CD8-positive, alpha-beta T cell (primary cell): ENCODE measurements at regions of chr5 and their contacts with region 1.

Region 1: GRCh38 chr5:140710899-140711552 is 10.8 kb downstream of the ZMAT2 start:
- DNase-seq: peak; percentile 66 to 95 (median 85)
- ATAC-seq: peak; percentile 83
- H3K4me3 ChIP-seq: peak overlapping the region; percentile 58 to 74
- H3K4me3 Mint-ChIP-seq: peak overlapping the region; percentile 99
- H3K27ac ChIP-seq: peak overlapping the region; percentile 72 to 86
- H3K27ac Mint-ChIP-seq: peak overlapping the region; percentile 99
- H3K4me1 ChIP-seq: no peaks in the 10 kb centered on the region
- H3K4me1 Mint-ChIP-seq: peaks cover 16% of the 10 kb centered on the region
- H3K27me3 ChIP-seq: no peaks in the 10 kb centered on the region
- H3K27me3 Mint-ChIP-seq: no peaks in the 10 kb centered on the region
- CTCF ChIP-seq: no peak

Region 2: GRCh38 chr5:140302786-140303639 is 408.0 kb before region 1 on chr5 and contains the start of gene PFDN1:
- CTCF ChIA-PET with region 1: no interaction called
- POLR2A ChIA-PET with region 1: no interaction called
- intact Hi-C with region 1: no loop called
- DNase-seq: peak; percentile 77 to 97 (median 90)
- ATAC-seq: peak; percentile 100
- H3K4me3 ChIP-seq: peak within 1 kb of the TSS; percentile 73 to 87
- H3K4me3 Mint-ChIP-seq: peak within 1 kb of the TSS; percentile 99
- H3K27ac ChIP-seq: peak within 1 kb of the TSS; percentile 61 to 82
- H3K27ac Mint-ChIP-seq: peak within 1 kb of the TSS; percentile 98
- H3K4me1 ChIP-seq: peaks cover 14% of the 10 kb centered on the region
- H3K4me1 Mint-ChIP-seq: peaks cover 29% of the 10 kb centered on the region
- H3K27me3 ChIP-seq: no peaks in the 10 kb centered on the region
- H3K27me3 Mint-ChIP-seq: peaks cover 4% of the 10 kb centered on the region
- CTCF ChIP-seq: no peak
- total RNA-seq, gene PFDN1: 28.4 to 30.5 TPM

Region 3: DNA sequence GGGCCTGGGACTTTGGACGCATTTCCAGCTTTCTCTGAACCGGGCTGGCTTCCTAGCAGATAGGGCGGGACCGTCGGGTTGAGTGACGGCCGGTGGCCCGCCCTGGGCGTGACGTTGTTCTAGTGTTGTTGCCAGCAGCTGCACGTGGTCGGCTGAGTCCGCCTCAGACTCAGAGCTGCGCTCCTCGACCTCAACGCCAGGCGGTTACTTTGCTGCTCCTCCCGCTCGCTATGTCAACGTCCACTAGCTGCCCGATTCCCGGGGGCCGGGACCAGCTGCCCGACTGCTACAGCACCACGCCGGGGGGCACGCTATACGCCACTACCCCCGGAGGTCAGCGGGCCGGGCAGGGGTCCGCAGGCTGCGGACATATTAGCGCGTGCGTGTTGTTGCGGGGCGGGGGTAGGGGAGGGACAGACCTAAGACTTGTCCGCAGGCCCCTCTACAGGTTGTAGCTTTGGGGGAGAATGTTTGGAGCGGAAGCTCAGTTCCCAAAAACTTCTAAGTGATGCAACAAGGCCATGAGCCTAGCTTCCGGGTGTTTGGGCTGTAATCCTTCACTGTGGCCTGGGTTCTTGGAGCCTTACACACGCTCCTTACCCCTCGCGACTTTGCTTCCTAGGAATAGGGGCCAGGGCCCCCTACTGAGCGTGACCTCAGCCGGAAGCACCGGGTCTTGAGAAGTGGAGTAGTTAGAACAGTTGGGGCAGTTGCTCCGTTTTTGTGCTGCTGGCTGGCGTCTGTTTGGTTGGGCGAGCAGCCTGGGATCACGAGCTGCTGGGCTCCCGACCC is 163.3 kb before region 1 on chr5 and contains the start of gene EIF4EBP3:
- CTCF ChIA-PET with region 1: no interaction called
- POLR2A ChIA-PET with region 1: interaction called, 9 read pairs
- intact Hi-C with region 1: loop called in 1 of 2 experiments (anchors 2 kb)
- DNase-seq: peak; percentile 74 to 94 (median 88)
- ATAC-seq: peak; percentile 97
- H3K4me3 ChIP-seq: peak within 1 kb of the TSS; percentile 69 to 96
- H3K4me3 Mint-ChIP-seq: peak within 1 kb of the TSS; percentile 90
- H3K27ac ChIP-seq: peak within 1 kb of the TSS; percentile 88 to 96
- H3K27ac Mint-ChIP-seq: peak within 1 kb of the TSS; percentile 98
- H3K4me1 ChIP-seq: peaks cover 21% of the 10 kb centered on the region
- H3K4me1 Mint-ChIP-seq: peaks cover 31% of the 10 kb centered on the region
- H3K27me3 ChIP-seq: no peaks in the 10 kb centered on the region
- H3K27me3 Mint-ChIP-seq: no peaks in the 10 kb centered on the region
- CTCF ChIP-seq: peak; percentile 72
- total RNA-seq, gene EIF4EBP3: 10.6 to 13.7 TPM

Region 4: GRCh38 chr5:140557136-140557805 is 153.8 kb before region 1 on chr5 and contains the start of gene SRA1:
- CTCF ChIA-PET with region 1: no interaction called
- POLR2A ChIA-PET with region 1: no interaction called
- intact Hi-C with region 1: loop called in 1 of 2 experiments (anchors 2 kb)
- DNase-seq: peak; percentile 53 to 90 (median 80)
- ATAC-seq: peak; percentile 83
- H3K4me3 ChIP-seq: peak within 1 kb of the TSS; percentile 87 to 97
- H3K4me3 Mint-ChIP-seq: peak within 1 kb of the TSS; percentile 91
- H3K27ac ChIP-seq: peak within 1 kb of the TSS; percentile 89 to 97
- H3K27ac Mint-ChIP-seq: peak within 1 kb of the TSS; percentile 96
- H3K4me1 ChIP-seq: peaks cover 28% of the 10 kb centered on the region
- H3K4me1 Mint-ChIP-seq: peaks cover 47% of the 10 kb centered on the region
- H3K27me3 ChIP-seq: no peaks in the 10 kb centered on the region
- H3K27me3 Mint-ChIP-seq: no peaks in the 10 kb centered on the region
- CTCF ChIP-seq: no peak
- total RNA-seq, gene SRA1: 33.7 to 37.2 TPM

Region 5: DNA sequence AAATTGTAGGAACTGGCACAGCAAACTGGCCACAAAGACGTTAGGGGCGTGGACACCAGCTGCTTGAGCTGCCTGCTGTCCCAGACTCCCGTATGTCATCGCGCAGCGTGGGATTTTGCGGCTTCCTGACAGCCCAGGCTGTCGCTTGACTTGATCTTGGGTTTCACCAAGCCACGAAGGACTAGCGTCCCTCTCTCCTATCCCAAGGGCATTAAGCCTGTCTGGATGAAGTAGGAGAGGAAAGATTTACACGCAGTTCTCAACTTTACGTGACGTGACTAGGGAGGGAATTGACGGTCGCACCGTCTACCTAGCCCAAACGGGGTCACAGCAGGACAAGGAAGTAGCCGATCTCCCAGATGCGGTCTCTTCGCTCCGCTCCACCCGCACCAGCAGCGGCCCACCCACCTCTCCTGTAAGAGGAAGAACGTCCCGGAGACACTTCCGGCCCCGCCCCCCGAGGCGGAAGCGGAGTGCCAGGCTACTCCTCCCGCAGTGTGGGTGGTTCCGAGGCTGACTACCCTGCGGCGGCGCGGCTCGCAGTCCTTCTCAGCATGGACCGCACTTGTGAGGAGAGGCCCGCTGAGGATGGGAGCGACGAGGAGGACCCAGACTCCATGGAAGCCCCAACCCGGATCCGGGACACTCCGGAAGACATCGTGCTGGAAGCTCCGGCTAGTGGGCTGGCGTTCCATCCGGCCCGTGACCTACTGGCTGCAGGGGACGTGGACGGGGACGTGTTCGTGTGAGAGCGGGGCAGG is 46.5 kb before region 1 on chr5 and contains the start of gene WDR55:
- CTCF ChIA-PET with region 1: no interaction called
- POLR2A ChIA-PET with region 1: interaction called, 4 read pairs
- intact Hi-C with region 1: loop called (anchors 1 to 2 kb)
- DNase-seq: peak; percentile 90 to 98 (median 97)
- ATAC-seq: peak; percentile 92
- H3K4me3 ChIP-seq: peak within 1 kb of the TSS; percentile 80 to 95
- H3K4me3 Mint-ChIP-seq: peak within 1 kb of the TSS; percentile 89
- H3K27ac ChIP-seq: peak within 1 kb of the TSS; percentile 90 to 91
- H3K27ac Mint-ChIP-seq: peak within 1 kb of the TSS; percentile 96
- H3K4me1 ChIP-seq: peaks cover 15% of the 10 kb centered on the region
- H3K4me1 Mint-ChIP-seq: peaks cover 38% of the 10 kb centered on the region
- H3K27me3 ChIP-seq: no peaks in the 10 kb centered on the region
- H3K27me3 Mint-ChIP-seq: no peaks in the 10 kb centered on the region
- CTCF ChIP-seq: no peak
- total RNA-seq, gene WDR55: 45.4 to 49.2 TPM

Region 6: DNA sequence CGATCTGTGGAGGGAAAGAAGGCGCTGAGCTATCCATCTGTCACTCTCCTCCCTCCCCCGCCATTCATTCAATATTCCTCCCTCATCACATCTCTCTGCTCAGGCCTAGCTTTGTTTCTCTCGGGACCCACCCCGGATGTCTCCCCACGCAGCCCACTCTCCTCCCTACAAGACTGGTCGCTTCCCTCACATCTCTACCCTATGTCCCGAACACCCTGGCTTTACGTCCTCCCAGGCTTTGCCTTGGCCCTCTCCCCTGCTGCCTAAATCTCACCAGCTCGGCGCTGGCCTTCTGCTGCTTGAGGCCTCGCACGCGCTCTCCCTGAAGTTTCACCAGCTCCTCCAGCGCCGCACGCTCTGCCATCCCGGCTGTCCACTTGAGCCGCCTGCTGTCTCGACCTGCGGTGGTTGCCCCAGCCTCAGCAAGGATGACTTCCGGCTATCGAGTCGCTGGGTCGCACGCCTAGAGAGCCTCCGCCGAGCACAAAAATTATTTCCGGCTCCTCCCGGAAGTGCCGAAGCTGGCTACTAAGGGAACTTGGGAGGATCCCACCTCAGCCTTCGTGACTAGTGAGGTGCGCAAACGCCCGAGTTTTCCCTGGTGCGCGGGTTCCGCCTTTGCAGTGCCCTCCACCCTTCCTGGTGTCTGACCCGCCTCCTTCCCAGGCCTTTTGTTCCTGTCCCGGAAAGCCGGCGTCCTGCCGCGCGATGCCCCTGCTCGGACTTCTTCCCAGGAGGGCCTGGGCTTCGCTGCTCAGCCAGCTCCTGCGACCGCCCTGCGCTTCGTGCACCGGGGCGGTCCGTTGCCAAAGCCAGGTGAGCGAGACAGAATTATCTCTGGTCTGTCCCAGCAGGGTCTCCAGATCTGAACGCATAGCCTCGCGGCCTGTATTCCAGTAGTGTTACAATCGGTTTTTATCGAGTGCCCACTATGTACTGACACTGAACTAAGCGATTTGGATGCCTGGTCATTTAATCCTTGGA is 19.8 kb before region 1 on chr5 and contains the starts of genes HARS1 and HARS2:
- CTCF ChIA-PET with region 1: interaction called, 6 read pairs
- POLR2A ChIA-PET with region 1: interaction called, 6 read pairs
- intact Hi-C with region 1: loop called in 1 of 2 experiments (anchors 1 kb)
- DNase-seq: peak; percentile 58 to 92 (median 83)
- ATAC-seq: peak; percentile 88
- H3K4me3 ChIP-seq: peak within 1 kb of the TSS; percentile 84 to 94
- H3K4me3 Mint-ChIP-seq: peak within 1 kb of the TSS; percentile 99
- H3K27ac ChIP-seq: peak within 1 kb of the TSS; percentile 77 to 87
- H3K27ac Mint-ChIP-seq: peak within 1 kb of the TSS; percentile 98
- H3K4me1 ChIP-seq: peaks cover 23% of the 10 kb centered on the region
- H3K4me1 Mint-ChIP-seq: peaks cover 48% of the 10 kb centered on the region
- H3K27me3 ChIP-seq: no peaks in the 10 kb centered on the region
- H3K27me3 Mint-ChIP-seq: no peaks in the 10 kb centered on the region
- CTCF ChIP-seq: no peak
- total RNA-seq, gene HARS1: 67.3 to 70.2 TPM
- total RNA-seq, gene HARS2: 41.3 to 43.2 TPM

Region 7: DNA sequence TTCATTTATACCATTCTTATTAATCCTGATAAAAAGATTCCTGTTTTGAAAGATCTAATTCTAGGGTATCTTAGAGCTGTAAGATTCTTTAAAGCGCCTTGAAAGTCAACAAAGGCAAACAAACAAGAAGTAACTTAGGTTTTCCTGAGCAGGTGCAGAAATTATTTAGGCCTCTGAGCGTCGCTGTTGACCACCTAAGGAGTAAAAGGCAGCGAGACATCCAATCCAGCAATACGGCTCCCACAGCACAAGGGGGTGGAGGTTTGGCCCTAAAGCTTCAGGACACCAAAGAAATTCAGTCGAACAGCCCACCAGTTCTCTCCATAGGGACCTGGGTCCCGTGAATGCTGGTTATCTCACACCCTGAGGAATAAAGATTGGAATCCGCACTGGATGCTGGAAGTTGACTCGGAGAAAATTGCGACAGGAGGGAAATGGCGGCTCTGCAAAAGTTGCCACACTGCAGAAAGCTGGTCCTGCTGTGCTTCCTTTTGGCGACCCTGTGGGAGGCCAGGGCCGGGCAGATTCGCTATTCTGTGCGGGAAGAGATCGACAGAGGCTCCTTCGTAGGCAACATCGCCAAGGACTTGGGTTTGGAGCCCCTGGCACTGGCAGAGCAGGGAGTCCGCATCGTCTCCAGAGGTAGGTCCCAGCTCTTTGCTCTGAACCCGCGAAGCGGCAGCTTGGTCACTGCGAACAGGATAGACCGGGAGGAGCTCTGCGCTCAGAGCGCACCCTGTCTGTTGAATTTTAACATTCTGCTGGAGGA is 627.7 kb after region 1 on chr5 and contains the start of gene PCDHGA2:
- CTCF ChIA-PET with region 1: no interaction called
- POLR2A ChIA-PET with region 1: no interaction called
- intact Hi-C with region 1: no loop called
- DNase-seq: peak in 2 of 9 experiments; percentile 13 to 19
- ATAC-seq: no peak
- H3K4me3 ChIP-seq: no peak within 1 kb of the TSS
- H3K4me3 Mint-ChIP-seq: no peak within 1 kb of the TSS
- H3K27ac ChIP-seq: no peak within 1 kb of the TSS
- H3K27ac Mint-ChIP-seq: no peak within 1 kb of the TSS
- H3K4me1 ChIP-seq: no peaks in the 10 kb centered on the region
- H3K4me1 Mint-ChIP-seq: no peaks in the 10 kb centered on the region
- H3K27me3 ChIP-seq: peaks cover 15 to 20% of the 10 kb centered on the region in 2 experiments
- H3K27me3 Mint-ChIP-seq: peaks cover 61% of the 10 kb centered on the region
- CTCF ChIP-seq: no peak
- total RNA-seq, gene PCDHGA2: not detected

Region 8: GRCh38 chr5:141605523-141606277 is 894.7 kb after region 1 on chr5:
- CTCF ChIA-PET with region 1: no interaction called
- POLR2A ChIA-PET with region 1: no interaction called
- intact Hi-C with region 1: loop called in 1 of 2 experiments (anchors 10 kb)
- DNase-seq: peak; percentile 34 to 95 (median 76)
- ATAC-seq: peak; percentile 92
- H3K4me3 ChIP-seq: peak overlapping the region; percentile 19 to 29
- H3K4me3 Mint-ChIP-seq: peak overlapping the region; percentile 69
- H3K27ac ChIP-seq: peak overlapping the region; percentile 56 to 87
- H3K27ac Mint-ChIP-seq: peak overlapping the region; percentile 85
- H3K4me1 ChIP-seq: peaks cover 91% of the 10 kb centered on the region
- H3K4me1 Mint-ChIP-seq: peaks cover 87% of the 10 kb centered on the region
- H3K27me3 ChIP-seq: no peaks in the 10 kb centered on the region
- H3K27me3 Mint-ChIP-seq: no peaks in the 10 kb centered on the region
- CTCF ChIP-seq: no peak